A673 (cell line): ENCODE measurements at regions of chr4 and their contacts with region 1.

Region 1: GRCh38 chr4:70488748-70489147 is 16.8 kb downstream of the MUC7 start:
- DNase-seq: no peak
- H3K4me3 ChIP-seq: no peak overlapping the region
- H3K27ac ChIP-seq: no peak overlapping the region
- H3K4me1 ChIP-seq: no peaks in the 10 kb centered on the region
- H3K27me3 ChIP-seq: no peaks in the 10 kb centered on the region
- CTCF ChIP-seq: no peak

Region 2: GRCh38 chr4:70463335-70463734 is 25.4 kb before region 1 on chr4:
- CTCF ChIA-PET with region 1: no interaction called
- POLR2A ChIA-PET with region 1: no interaction called
- intact Hi-C with region 1: loop called (anchors 1 kb)
- DNase-seq: no peak
- H3K4me3 ChIP-seq: no peak overlapping the region
- H3K27ac ChIP-seq: no peak overlapping the region
- H3K4me1 ChIP-seq: no peaks in the 10 kb centered on the region
- H3K27me3 ChIP-seq: no peaks in the 10 kb centered on the region
- CTCF ChIP-seq: no peak